ENCODE measurements at regions of chr14 and their contacts with region 1.

Region 1: GRCh38 chr14:73728717-73729330 is 14.6 kb upstream of the PNMA1 start:
- DNase-seq: peak; percentile 60
- ATAC-seq: peak; percentile 86
- H3K4me3 ChIP-seq: no peak overlapping the region
- H3K27ac ChIP-seq: no peak overlapping the region
- H3K4me1 ChIP-seq: peaks cover 19% of the 10 kb centered on the region
- H3K27me3 ChIP-seq: no peaks in the 10 kb centered on the region
- CTCF ChIP-seq: peak; percentile 95
- EP300 ChIP-seq: no peak
- POLR2A ChIP-seq: no peak
- RAD21 ChIP-seq: peak; percentile 92

Region 2: GRCh38 chr14:73825551-73826188 is 96.8 kb after region 1 on chr14:
- CTCF ChIA-PET with region 1: interaction called, 39 read pairs
- POLR2A ChIA-PET with region 1: no interaction called
- in situ Hi-C with region 1: loop called (anchors 5 kb)
- intact Hi-C with region 1: loop called (anchors 1 kb)
- DNase-seq: peak; percentile 69
- ATAC-seq: peak; percentile 92
- H3K4me3 ChIP-seq: no peak overlapping the region
- H3K27ac ChIP-seq: no peak overlapping the region
- H3K4me1 ChIP-seq: peaks cover 15% of the 10 kb centered on the region
- H3K27me3 ChIP-seq: peaks cover 0 to 2% of the 10 kb centered on the region in 2 experiments; a peak in 2 of 5 replicates
- CTCF ChIP-seq: peak; percentile 90
- EP300 ChIP-seq: no peak
- POLR2A ChIP-seq: no peak
- RAD21 ChIP-seq: peak; percentile 94

Region 3: DNA sequence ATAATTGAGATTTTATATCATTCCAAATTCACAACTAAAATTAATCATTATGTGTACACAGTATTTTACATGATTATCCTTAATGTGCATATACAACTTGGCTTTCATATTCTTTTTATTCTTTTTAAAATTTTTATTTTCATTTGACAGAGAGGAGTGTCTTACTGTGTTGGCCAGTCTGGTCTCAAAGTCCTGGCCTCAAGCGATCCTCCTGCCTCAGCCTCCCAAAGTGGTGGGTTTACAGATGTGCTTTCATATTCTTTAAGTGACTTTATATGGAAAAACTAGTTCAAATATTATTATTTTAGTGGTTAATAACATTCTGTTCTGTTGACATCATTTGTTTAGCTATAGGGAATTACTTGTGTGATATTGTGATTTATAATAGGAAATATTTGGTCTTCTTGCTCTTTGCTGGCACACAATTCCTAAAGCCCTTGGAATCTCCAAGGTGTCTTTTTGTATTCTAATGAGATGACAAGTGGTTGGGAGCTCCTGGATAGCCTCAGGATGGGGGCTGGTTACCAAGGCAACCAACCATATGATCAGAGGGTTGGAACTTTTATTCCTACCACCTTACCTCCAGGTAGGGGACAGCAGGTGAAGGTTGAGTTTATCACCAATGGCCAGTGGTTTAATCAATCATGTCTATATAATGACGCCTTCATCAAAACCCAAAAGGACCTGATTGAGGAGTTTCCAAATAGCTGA is 141.9 kb after region 1 on chr14:
- CTCF ChIA-PET with region 1: interaction called, 4 read pairs
- POLR2A ChIA-PET with region 1: no interaction called
- in situ Hi-C with region 1: no loop called
- intact Hi-C with region 1: loop called (anchors 2 kb)
- DNase-seq: no peak
- ATAC-seq: no peak
- H3K4me3 ChIP-seq: no peak overlapping the region
- H3K27ac ChIP-seq: no peak overlapping the region
- H3K4me1 ChIP-seq: no peaks in the 10 kb centered on the region
- H3K27me3 ChIP-seq: no peaks in the 10 kb centered on the region
- CTCF ChIP-seq: no peak
- EP300 ChIP-seq: no peak
- POLR2A ChIP-seq: no peak
- RAD21 ChIP-seq: no peak

Region 4: GRCh38 chr14:74038015-74038859 is 309.4 kb after region 1 on chr14:
- CTCF ChIA-PET with region 1: no interaction called
- POLR2A ChIA-PET with region 1: no interaction called
- in situ Hi-C with region 1: loop called (anchors 25 kb)
- intact Hi-C with region 1: no loop called
- DNase-seq: peak; percentile 67
- ATAC-seq: peak; percentile 51
- H3K4me3 ChIP-seq: no peak overlapping the region
- H3K27ac ChIP-seq: no peak overlapping the region
- H3K4me1 ChIP-seq: no peaks in the 10 kb centered on the region
- H3K27me3 ChIP-seq: no peaks in the 10 kb centered on the region
- CTCF ChIP-seq: peak; percentile 70
- EP300 ChIP-seq: no peak
- POLR2A ChIP-seq: no peak
- RAD21 ChIP-seq: no peak

Measured in HepG2 (cell line).